H1 (cell line): ENCODE measurements at regions of chr6 and their contacts with region 1.

Region 1: DNA sequence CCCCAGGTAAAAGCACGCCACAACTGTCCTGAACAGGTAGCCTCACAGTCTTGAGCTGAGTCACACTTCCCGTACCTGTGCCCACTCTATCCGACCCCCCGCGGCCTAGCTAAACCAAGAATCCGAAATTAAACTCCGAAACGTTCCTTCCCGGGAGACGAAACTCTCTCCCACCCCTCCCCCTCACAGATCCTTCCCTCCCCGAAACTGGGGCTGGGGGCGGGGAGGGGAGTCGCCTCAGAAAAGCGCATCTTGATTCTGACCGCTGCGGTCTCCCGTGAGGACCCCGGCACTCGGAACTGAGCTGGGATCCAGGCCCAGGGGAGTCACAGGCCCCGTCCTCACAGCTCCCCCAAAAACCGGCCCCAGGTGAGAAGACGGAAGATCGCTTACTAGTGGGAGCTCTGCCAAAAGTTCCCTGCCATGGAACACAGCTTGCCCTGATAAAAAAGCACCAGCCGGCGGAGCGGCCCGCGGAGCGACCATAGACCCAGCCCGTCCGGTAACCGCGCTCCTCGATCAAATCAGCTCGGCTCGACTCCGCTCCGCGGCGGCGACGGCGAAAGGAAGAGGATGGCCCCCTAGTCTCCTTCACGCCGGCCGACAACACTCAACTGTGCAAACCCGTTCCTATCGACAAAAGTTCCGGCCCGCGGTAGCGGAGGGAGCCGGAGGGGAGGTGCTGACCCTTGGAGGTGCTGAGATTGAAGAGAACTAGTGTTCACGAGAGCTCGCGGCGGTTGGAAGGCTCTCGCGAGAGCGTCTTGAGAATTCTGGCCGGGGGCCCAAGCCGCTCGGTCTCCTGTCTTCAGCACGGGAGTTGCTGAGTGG is at the start of gene CCNC:
- DNase-seq: peak; percentile 93 to 97
- H3K4me3 ChIP-seq: peak within 1 kb of the TSS; percentile 81 to 98 (median 96)
- H3K27ac ChIP-seq: peak within 1 kb of the TSS; percentile 95
- H3K4me1 ChIP-seq: peaks cover 0 to 2% (median 0%) of the 10 kb centered on the region in 4 experiments; a peak in 1 of 7 replicates
- H3K27me3 ChIP-seq: no peaks in the 10 kb centered on the region
- CTCF ChIP-seq: no peak
- EP300 ChIP-seq: peak; percentile 24 to 89
- POLR2A ChIP-seq: peak; percentile 95 to 99
- RAD21 ChIP-seq: no peak; a peak in 1 of 4 replicates
- total RNA-seq, gene CCNC: 94.5 and 107 TPM in 2 replicates

Region 2: GRCh38 chr6:99490608-99491007 is 77.7 kb before region 1 on chr6:
- CTCF ChIA-PET with region 1: no interaction called
- POLR2A ChIA-PET with region 1: no interaction called
- DNase-seq: no peak
- H3K4me3 ChIP-seq: no peak overlapping the region
- H3K27ac ChIP-seq: no peak overlapping the region
- H3K4me1 ChIP-seq: no peaks in the 10 kb centered on the region
- H3K27me3 ChIP-seq: no peaks in the 10 kb centered on the region
- CTCF ChIP-seq: no peak
- EP300 ChIP-seq: no peak
- POLR2A ChIP-seq: no peak
- RAD21 ChIP-seq: no peak

Region 3: DNA sequence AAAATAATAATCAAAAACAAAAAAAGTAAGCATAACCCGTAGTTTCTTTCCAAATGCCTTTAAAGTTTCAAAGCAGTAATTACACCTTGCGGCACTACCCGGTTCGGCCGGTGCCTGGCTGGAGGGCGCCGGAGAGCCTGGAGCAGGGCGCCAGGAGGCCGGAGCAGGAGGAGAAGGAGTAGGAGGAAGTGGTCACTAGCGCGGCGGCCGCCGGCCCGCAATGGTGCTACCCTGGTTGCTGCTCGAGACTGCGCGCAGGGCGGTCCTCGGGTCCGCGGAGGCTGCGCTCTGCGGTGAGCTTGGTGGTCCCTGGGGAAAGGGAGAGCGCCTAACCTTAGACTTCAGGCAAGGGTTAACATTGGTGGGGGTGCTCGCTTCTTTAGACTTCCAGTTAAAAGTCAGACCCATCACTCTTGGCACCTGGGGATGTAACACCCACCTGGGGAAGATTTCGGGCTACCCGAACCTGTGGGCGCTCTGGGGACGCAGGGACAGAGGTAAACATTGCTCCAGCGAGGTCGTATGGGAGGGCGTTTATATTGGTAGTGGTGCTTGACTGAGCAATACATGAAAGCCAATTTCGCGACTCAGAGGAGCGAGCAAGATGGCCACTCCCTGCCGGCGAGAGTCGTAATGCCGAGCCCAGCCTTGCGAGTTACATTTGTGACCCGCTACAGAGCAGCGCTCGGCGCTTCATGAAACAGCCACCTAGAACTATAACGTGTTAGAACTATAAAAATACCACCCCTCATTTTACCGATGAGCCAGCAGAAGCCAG is 47.3 kb before region 1 on chr6:
- CTCF ChIA-PET with region 1: interaction called, 6 read pairs
- POLR2A ChIA-PET with region 1: interaction called, 60 read pairs
- DNase-seq: peak in 1 of 2 experiments; percentile 88
- H3K4me3 ChIP-seq: peak overlapping the region; percentile 73 to 99 (median 94)
- H3K27ac ChIP-seq: peak overlapping the region; percentile 95
- H3K4me1 ChIP-seq: peaks cover 0 to 4% (median 2%) of the 10 kb centered on the region in 4 experiments; a peak in 1 of 7 replicates
- H3K27me3 ChIP-seq: no peaks in the 10 kb centered on the region
- CTCF ChIP-seq: peak; percentile 74 to 79 (median 78)
- EP300 ChIP-seq: no peak
- POLR2A ChIP-seq: peak; percentile 98 to 99
- RAD21 ChIP-seq: peak; percentile 46 to 60

Region 4: DNA sequence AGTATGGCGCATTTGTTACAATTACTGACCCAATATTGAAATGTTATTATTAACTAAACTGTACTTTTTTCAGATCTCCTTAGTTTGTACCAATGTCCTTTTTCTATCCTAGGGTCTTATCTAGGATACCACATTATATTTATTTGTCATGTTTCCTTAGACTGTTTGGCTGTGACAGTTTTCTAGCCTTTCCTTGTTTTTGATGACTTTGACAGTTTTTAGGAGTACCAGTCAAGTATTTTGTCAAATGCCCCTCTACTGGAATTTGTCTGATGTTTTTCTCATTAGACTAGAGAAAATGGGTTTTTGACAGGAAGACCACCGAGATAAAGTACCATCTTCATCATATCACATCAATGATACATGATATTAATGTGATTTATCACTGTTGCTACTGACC is 14.4 kb before region 1 on chr6:
- CTCF ChIA-PET with region 1: no interaction called
- POLR2A ChIA-PET with region 1: interaction called, 21 read pairs
- DNase-seq: no peak
- H3K4me3 ChIP-seq: no peak overlapping the region
- H3K27ac ChIP-seq: no peak overlapping the region
- H3K4me1 ChIP-seq: no peaks in the 10 kb centered on the region
- H3K27me3 ChIP-seq: no peaks in the 10 kb centered on the region
- CTCF ChIP-seq: no peak
- EP300 ChIP-seq: no peak
- POLR2A ChIP-seq: no peak
- RAD21 ChIP-seq: no peak

Region 5: DNA sequence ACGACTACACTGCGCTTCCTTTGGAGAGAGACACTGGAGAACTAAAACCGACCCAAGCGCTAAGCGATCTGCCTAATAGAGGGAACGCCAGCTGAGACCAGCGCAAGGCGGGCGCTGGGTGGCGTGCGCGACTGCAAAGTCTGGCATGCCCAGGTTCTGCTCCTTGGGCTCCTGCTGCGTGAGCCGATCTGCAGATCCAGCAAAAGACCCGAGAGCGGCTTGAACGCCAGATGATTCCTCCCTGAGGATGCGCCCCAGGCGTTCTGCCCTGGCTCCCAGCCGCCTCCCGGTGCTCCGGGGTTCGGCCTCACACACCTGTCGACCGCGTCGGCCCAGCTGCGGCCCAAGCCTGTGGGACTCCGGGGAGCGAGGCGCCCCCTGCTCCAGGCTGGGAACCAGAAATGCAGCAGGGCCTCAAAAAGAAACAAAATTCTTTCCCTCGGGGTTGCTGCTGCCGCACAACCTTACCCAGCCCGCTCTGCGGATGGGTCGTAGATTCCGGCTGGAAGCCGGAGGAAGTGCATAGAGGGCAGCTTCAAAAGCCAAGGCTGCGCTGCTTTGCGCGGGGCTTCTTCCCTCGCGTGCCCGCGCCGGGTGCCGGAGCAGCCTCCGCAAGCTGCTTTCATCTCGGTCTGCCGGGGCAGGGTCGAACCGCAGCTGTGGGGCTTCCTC is 20.4 kb after region 1 on chr6:
- CTCF ChIA-PET with region 1: interaction called, 7 read pairs
- POLR2A ChIA-PET with region 1: interaction called, 29 read pairs
- DNase-seq: peak; percentile 81 to 84
- H3K4me3 ChIP-seq: peak overlapping the region; percentile 25 to 61 (median 38)
- H3K27ac ChIP-seq: no peak overlapping the region
- H3K4me1 ChIP-seq: peaks cover 0 to 6% (median 2%) of the 10 kb centered on the region in 4 experiments; a peak in 4 of 7 replicates
- H3K27me3 ChIP-seq: peaks cover 56 to 90% (median 76%) of the 10 kb centered on the region in 4 experiments
- CTCF ChIP-seq: peak; percentile 70 to 78 (median 76)
- EP300 ChIP-seq: no peak
- POLR2A ChIP-seq: no peak
- RAD21 ChIP-seq: peak; percentile 81 to 85

Region 6: GRCh38 chr6:99613409-99613704 is 45.0 kb after region 1 on chr6:
- CTCF ChIA-PET with region 1: interaction called, 6 read pairs
- POLR2A ChIA-PET with region 1: interaction called, 18 read pairs
- DNase-seq: no peak
- H3K4me3 ChIP-seq: peak overlapping the region; percentile 13 to 59 (median 22); a peak in 7 of 8 replicates
- H3K27ac ChIP-seq: no peak overlapping the region
- H3K4me1 ChIP-seq: peaks cover 0 to 25% (median 14%) of the 10 kb centered on the region in 4 experiments; a peak in 5 of 7 replicates
- H3K27me3 ChIP-seq: peaks cover 75 to 100% (median 88%) of the 10 kb centered on the region in 4 experiments
- CTCF ChIP-seq: peak; percentile 49 to 69 (median 51)
- EP300 ChIP-seq: no peak
- POLR2A ChIP-seq: no peak
- RAD21 ChIP-seq: peak in 1 of 2 experiments; percentile 35; a peak in 3 of 4 replicates

Region 7: DNA sequence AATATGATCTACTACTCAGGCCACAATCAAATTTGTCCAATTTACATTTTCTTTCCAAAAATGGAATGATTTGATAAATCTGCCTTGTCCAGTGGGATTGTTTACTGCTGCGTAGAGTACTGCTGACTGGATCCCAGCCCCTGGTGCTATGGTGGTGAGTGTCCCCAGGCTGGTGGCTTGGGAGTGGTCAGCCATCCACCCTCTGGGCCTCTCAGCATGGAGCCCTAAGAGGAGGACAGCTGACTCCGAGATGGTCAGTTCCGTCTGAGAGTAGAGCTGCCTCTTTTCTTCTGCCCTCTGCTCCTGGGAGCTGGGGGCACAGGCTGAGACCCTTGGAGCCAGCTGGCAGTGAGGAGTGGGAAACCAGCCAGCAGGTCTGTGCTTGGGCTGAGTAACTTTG is 61.0 kb after region 1 on chr6:
- CTCF ChIA-PET with region 1: no interaction called
- POLR2A ChIA-PET with region 1: no interaction called
- DNase-seq: no peak
- H3K4me3 ChIP-seq: no peak overlapping the region
- H3K27ac ChIP-seq: no peak overlapping the region
- H3K4me1 ChIP-seq: no peaks in the 10 kb centered on the region; a peak in 1 of 7 replicates
- H3K27me3 ChIP-seq: no peaks in the 10 kb centered on the region
- CTCF ChIP-seq: no peak
- EP300 ChIP-seq: no peak
- POLR2A ChIP-seq: no peak
- RAD21 ChIP-seq: no peak